B cell (primary cell): ENCODE measurements at regions of chr12 and their contacts with region 1.

Region 1: GRCh38 chr12:113184900-113185773 is at the starts of genes DDX54 and RITA1:
- DNase-seq: peak; percentile 95
- ATAC-seq: peak; percentile 84
- H3K4me3 ChIP-seq: peak within 1 kb of the TSS; percentile 51 to 100 (median 94)
- H3K4me3 Mint-ChIP-seq: peak within 1 kb of the TSS; percentile 95
- H3K27ac ChIP-seq: peak within 1 kb of the TSS; percentile 98
- H3K27ac Mint-ChIP-seq: peak within 1 kb of the TSS; percentile 96
- H3K4me1 ChIP-seq: peaks cover 25 to 34% of the 10 kb centered on the region in 2 donors
- H3K4me1 Mint-ChIP-seq: peaks cover 38% of the 10 kb centered on the region
- H3K27me3 ChIP-seq: no peaks in the 10 kb centered on the region
- H3K27me3 Mint-ChIP-seq: no peaks in the 10 kb centered on the region
- CTCF ChIP-seq: no peak
- total RNA-seq, gene DDX54: 90.1 and 101 TPM in 2 replicates
- total RNA-seq, gene RITA1: 16.2 and 17.9 TPM in 2 replicates

Region 2: DNA sequence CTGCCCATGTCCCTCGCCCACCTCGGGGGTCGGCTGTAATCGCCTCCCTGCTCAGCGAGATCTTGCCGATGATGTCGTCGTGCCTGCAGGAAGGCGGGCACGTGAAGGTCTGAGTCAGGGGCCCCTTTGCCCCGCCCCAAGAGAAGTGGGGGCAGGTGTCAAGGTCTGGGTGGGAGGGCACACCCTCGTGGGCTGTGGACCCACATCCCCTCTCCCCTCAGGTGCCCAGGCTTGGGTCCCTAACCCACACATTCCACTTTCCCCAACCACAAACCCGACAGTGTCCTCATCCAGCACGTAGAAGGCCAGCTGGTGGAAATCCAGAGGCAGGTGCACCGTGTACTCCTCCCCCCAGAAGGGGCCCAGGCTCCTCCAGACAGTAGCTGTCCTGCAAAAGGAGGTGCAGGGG is 57.3 kb before region 1 on chr12:
- CTCF ChIA-PET with region 1: no interaction called
- POLR2A ChIA-PET with region 1: no interaction called
- intact Hi-C with region 1: no loop called
- DNase-seq: no peak
- ATAC-seq: no peak
- H3K4me3 ChIP-seq: no peak overlapping the region
- H3K4me3 Mint-ChIP-seq: no peak overlapping the region
- H3K27ac ChIP-seq: no peak overlapping the region
- H3K27ac Mint-ChIP-seq: no peak overlapping the region
- H3K4me1 ChIP-seq: peaks cover 18 to 20% of the 10 kb centered on the region in 2 donors
- H3K4me1 Mint-ChIP-seq: peaks cover 32% of the 10 kb centered on the region
- H3K27me3 ChIP-seq: no peaks in the 10 kb centered on the region
- H3K27me3 Mint-ChIP-seq: no peaks in the 10 kb centered on the region
- CTCF ChIP-seq: no peak

Region 3: GRCh38 chr12:113140706-113141105 is 44.4 kb before region 1 on chr12:
- CTCF ChIA-PET with region 1: no interaction called
- POLR2A ChIA-PET with region 1: interaction called, 10 read pairs
- intact Hi-C with region 1: no loop called
- DNase-seq: no peak
- ATAC-seq: no peak
- H3K4me3 ChIP-seq: no peak overlapping the region
- H3K4me3 Mint-ChIP-seq: no peak overlapping the region
- H3K27ac ChIP-seq: no peak overlapping the region
- H3K27ac Mint-ChIP-seq: no peak overlapping the region
- H3K4me1 ChIP-seq: peaks cover 22 to 29% of the 10 kb centered on the region in 2 donors
- H3K4me1 Mint-ChIP-seq: peaks cover 30% of the 10 kb centered on the region
- H3K27me3 ChIP-seq: peaks cover 0 to 8% (median 3%) of the 10 kb centered on the region in 4 experiments
- H3K27me3 Mint-ChIP-seq: peaks cover 6% of the 10 kb centered on the region
- CTCF ChIP-seq: no peak

Region 4: DNA sequence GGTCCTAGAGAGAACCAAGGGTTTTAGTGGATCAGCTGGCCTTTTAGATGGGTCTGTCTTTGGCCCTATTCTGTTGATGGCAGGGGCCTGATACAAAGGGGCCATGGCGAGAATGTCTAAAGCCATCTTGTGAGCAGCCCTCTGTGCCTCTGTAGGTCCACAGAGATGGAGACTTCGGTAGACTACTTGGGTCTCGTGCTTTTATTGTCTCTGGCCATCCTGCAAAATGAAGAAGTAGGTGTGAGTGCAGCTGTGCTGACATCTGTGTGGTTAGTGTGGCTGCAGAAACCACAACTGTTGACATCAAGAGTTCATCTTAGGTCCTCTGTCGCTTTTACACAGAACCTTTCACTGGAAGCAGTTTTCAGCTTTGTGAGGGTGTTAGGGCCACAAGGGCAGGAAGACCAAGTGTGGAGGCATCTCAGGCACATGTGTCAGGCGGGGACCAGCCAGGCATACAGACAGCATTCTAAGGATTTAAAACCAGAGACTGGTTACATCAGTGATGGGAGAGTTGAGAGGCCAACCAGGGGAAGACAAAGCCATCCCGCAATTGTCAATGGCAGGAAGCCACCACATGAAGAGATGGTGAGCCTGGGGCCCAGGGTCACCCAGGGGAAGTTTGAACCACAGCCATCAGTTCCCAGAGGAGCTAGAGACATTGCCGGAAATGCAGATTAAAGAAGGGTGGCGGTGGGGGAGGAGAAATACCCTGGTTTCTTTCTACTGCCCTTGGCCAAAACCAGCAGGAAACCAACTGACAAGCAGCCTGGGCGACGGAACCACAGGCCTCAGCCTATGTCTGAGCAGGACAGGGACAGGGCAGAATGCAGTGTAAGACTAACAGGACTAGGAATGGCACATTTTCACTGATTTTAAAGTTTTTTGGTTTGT is 23.2 kb after region 1 on chr12:
- CTCF ChIA-PET with region 1: interaction called, 3 read pairs
- POLR2A ChIA-PET with region 1: interaction called, 8 read pairs
- intact Hi-C with region 1: loop called (anchors 1 kb)
- DNase-seq: peak; percentile 95
- ATAC-seq: peak; percentile 75
- H3K4me3 ChIP-seq: peak overlapping the region in 3 of 5 experiments; percentile 4 to 47 (median 5)
- H3K4me3 Mint-ChIP-seq: peak overlapping the region; percentile 86
- H3K27ac ChIP-seq: peak overlapping the region; percentile 91 to 94
- H3K27ac Mint-ChIP-seq: peak overlapping the region; percentile 99
- H3K4me1 ChIP-seq: peaks cover 46 to 59% of the 10 kb centered on the region in 2 donors
- H3K4me1 Mint-ChIP-seq: peaks cover 62% of the 10 kb centered on the region
- H3K27me3 ChIP-seq: no peaks in the 10 kb centered on the region
- H3K27me3 Mint-ChIP-seq: no peaks in the 10 kb centered on the region
- CTCF ChIP-seq: no peak

Region 5: DNA sequence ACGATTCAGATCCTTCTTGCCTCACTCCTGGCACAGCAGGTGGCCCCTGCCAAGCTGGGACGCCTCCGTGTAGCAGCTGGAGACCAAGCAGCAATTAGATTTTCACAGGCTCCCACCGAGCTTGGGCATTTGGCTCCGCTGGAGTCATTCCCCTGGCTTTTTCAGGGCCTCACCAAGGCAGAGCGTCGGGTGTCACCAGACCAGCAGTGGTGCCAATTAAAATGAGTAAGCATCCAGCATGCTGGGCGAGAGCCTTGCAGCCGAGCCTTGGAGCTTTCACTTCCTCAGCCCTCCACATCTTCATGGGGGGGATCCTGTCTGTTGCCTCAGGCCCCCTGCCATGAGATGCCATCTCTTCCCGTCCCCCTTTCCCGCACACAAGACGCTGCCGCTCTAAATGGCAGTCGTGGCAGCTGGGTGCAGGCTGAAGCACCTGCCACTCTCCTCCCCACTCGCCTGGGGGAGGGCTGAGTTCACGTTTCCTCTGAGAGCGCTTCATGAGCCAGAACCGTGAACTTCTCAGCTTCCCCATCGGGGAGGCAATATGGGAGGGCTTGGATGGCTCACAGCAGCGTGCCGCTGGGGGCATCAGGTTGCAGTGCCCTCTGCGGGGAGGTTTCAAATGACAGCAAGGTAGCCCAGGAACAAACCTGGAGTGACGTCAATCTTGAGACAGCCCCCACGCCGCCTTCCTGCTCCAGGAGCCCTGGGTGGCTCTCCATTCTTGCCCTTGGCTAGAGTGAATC is 47.9 kb after region 1 on chr12:
- CTCF ChIA-PET with region 1: interaction called, 8 read pairs
- POLR2A ChIA-PET with region 1: interaction called, 10 read pairs
- intact Hi-C with region 1: loop called (anchors 1 kb)
- DNase-seq: peak; percentile 94
- ATAC-seq: peak; percentile 83
- H3K4me3 ChIP-seq: peak overlapping the region in 4 of 5 experiments; percentile 7 to 31 (median 17)
- H3K4me3 Mint-ChIP-seq: peak overlapping the region; percentile 82
- H3K27ac ChIP-seq: peak overlapping the region; percentile 54 to 73
- H3K27ac Mint-ChIP-seq: peak overlapping the region; percentile 87
- H3K4me1 ChIP-seq: peaks cover 67 to 76% of the 10 kb centered on the region in 2 donors
- H3K4me1 Mint-ChIP-seq: peaks cover 78% of the 10 kb centered on the region
- H3K27me3 ChIP-seq: no peaks in the 10 kb centered on the region
- H3K27me3 Mint-ChIP-seq: no peaks in the 10 kb centered on the region
- CTCF ChIP-seq: peak; percentile 74

Region 6: DNA sequence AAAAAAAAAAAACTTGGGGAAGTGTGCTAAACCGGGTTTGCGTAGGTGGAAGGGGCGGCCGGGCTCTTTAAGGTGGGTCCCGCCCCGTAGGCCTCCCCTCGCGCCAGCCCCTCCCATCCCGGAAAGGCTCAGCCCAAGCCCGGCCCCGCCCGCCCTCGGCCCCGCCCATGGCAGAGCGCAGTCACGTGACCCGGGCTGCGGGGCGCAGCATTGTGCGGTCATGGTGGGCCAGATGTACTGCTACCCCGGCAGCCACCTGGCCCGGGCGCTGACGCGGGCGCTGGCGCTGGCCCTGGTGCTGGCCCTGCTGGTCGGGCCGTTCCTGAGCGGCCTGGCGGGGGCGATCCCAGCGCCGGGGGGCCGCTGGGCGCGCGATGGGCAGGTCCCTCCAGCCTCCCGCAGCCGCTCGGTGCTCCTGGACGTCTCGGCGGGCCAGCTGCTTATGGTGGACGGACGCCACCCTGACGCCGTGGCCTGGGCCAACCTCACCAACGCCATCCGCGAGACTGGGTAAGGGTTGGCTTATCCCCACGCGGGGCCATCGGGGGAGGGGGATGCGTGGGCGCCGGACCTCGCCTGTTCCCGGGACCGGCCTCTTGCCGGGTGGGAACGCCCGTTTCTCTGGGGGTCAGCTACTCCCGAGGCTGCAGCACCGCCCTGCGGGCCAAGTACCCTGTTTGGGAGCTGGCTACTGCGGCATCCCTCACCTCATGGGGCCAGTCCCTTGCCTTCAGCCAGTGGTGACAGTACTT is 173.4 kb after region 1 on chr12 and contains the start of gene PLBD2:
- CTCF ChIA-PET with region 1: no interaction called
- POLR2A ChIA-PET with region 1: no interaction called
- intact Hi-C with region 1: loop called (anchors 1 kb)
- DNase-seq: peak; percentile 97
- ATAC-seq: peak; percentile 97
- H3K4me3 ChIP-seq: peak within 1 kb of the TSS; percentile 51 to 90 (median 68)
- H3K4me3 Mint-ChIP-seq: peak within 1 kb of the TSS; percentile 91
- H3K27ac ChIP-seq: peak within 1 kb of the TSS; percentile 36 to 79
- H3K27ac Mint-ChIP-seq: peak within 1 kb of the TSS; percentile 91
- H3K4me1 ChIP-seq: peaks cover 11 to 18% of the 10 kb centered on the region in 2 donors
- H3K4me1 Mint-ChIP-seq: peaks cover 12% of the 10 kb centered on the region
- H3K27me3 ChIP-seq: peaks cover 0 to 2% (median 0%) of the 10 kb centered on the region in 4 experiments
- H3K27me3 Mint-ChIP-seq: no peaks in the 10 kb centered on the region
- CTCF ChIP-seq: no peak
- total RNA-seq, gene PLBD2: 11.6 and 14.0 TPM in 2 replicates